CD4-positive, alpha-beta T cell (primary cell): ENCODE measurements at regions of chr3 and their contacts with region 1.

Region 1: GRCh38 chr3:98513091-98513511 is 9.6 kb downstream of the CLDND1 start:
- DNase-seq: no peak
- ATAC-seq: no peak
- H3K4me3 ChIP-seq: no peak overlapping the region
- H3K4me3 Mint-ChIP-seq: no peak overlapping the region
- H3K27ac ChIP-seq: no peak overlapping the region
- H3K27ac Mint-ChIP-seq: no peak overlapping the region
- H3K4me1 ChIP-seq: peaks cover 2% of the 10 kb centered on the region
- H3K4me1 Mint-ChIP-seq: peaks cover 31% of the 10 kb centered on the region
- H3K27me3 ChIP-seq: no peaks in the 10 kb centered on the region
- H3K27me3 Mint-ChIP-seq: no peaks in the 10 kb centered on the region
- CTCF ChIP-seq: no peak

Region 2: DNA sequence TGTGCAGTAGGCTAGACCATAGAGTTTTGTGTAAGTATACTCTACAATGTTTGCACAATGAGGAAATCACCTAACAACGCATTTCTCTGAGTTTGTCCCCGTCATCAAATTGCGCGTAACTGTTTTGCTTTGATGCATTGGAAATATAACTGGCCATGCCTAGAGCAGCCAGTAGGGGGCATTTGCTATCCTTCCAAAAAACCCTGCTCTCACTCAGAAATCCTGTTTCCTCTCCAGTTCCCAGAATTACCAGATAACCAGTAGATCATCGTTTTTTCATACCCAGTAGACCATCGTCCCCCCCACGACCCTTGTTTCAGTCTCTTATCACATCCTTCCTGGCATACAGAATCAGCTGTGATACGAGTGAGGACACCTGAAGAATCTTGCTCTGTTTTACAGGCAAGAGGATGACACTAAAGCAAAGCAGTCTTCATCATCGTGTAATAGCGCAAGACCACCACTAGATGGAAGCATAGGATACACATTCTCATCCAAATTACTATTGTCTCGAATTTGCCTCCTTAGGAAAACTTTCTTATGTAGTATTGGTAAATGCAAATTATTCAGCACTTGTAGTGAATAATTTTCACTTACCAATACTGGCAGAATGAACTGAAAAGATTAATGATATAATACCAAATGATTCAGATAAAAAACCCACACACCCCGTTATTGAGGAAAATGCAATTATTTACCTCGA is 473.6 kb before region 1 on chr3:
- CTCF ChIA-PET with region 1: no interaction called
- POLR2A ChIA-PET with region 1: no interaction called
- intact Hi-C with region 1: loop called in 1 of 2 experiments (anchors 10 kb)
- DNase-seq: peak; percentile 40 to 91 (median 62)
- ATAC-seq: peak; percentile 93
- H3K4me3 ChIP-seq: peak overlapping the region; percentile 45
- H3K4me3 Mint-ChIP-seq: peak overlapping the region; percentile 72
- H3K27ac ChIP-seq: peak overlapping the region; percentile 59 to 70
- H3K27ac Mint-ChIP-seq: peak overlapping the region; percentile 90
- H3K4me1 ChIP-seq: no peaks in the 10 kb centered on the region
- H3K4me1 Mint-ChIP-seq: no peaks in the 10 kb centered on the region
- H3K27me3 ChIP-seq: no peaks in the 10 kb centered on the region
- H3K27me3 Mint-ChIP-seq: peaks cover 15% of the 10 kb centered on the region
- CTCF ChIP-seq: peak; percentile 98

Region 3: DNA sequence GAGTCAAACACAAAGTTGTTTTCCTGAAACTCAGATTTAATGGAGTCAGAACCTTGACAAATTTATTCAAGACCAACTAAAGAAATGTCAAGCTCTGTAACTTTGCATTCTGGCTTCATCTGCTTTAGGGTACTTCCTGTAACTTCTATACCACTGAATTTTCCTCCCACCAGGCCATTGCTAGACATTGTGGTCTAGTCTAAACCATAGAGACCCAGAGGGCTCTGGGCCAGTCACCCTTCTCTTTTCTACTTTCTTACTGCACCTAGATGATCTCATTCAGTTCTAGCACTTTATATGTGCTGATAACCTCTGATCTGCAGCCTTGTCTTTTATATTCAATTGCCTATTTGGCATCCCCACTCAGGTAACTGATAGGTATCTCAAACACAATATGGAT is 52.9 kb before region 1 on chr3:
- CTCF ChIA-PET with region 1: no interaction called
- POLR2A ChIA-PET with region 1: no interaction called
- intact Hi-C with region 1: no loop called
- DNase-seq: no peak
- ATAC-seq: no peak
- H3K4me3 ChIP-seq: no peak overlapping the region
- H3K4me3 Mint-ChIP-seq: no peak overlapping the region
- H3K27ac ChIP-seq: no peak overlapping the region
- H3K27ac Mint-ChIP-seq: no peak overlapping the region
- H3K4me1 ChIP-seq: no peaks in the 10 kb centered on the region
- H3K4me1 Mint-ChIP-seq: no peaks in the 10 kb centered on the region
- H3K27me3 ChIP-seq: no peaks in the 10 kb centered on the region
- H3K27me3 Mint-ChIP-seq: no peaks in the 10 kb centered on the region
- CTCF ChIP-seq: no peak